ENCODE measurements at regions of chr9 and their contacts with region 1.

Region 1: GRCh38 chr9:134449221-134449894 is 123.1 kb downstream of the RXRA start:
- DNase-seq: peak; percentile 66
- H3K4me3 ChIP-seq: no peak overlapping the region
- H3K27ac ChIP-seq: no peak overlapping the region
- H3K4me1 ChIP-seq: no peaks in the 10 kb centered on the region
- CTCF ChIP-seq: peak; percentile 73

Region 2: DNA sequence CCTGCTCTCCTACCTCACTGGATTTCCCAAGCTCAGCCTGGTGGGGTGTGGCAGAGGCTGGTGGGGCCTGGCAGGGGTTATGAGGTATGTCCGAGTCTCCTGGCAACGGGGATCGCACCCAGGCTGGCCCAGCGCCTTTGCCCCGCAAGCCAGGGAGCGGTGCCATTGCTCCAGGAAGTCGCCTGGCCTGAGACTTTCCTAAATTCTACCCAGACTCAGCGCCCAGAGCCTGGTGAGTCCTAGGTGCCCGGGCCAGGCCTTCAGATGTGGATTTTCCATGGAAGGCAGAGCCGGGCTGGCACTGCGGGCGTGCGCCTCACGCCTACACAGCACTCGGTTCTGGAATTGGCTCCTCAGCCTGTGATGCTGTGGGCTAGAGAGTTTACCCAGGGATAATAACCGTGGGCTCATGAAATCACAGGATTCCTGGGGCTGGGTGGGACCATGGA is 36.8 kb after region 1 on chr9:
- CTCF ChIA-PET with region 1: interaction called, 11 read pairs
- POLR2A ChIA-PET with region 1: no interaction called
- intact Hi-C with region 1: no loop called
- DNase-seq: no peak
- H3K4me3 ChIP-seq: no peak overlapping the region
- H3K27ac ChIP-seq: no peak overlapping the region
- H3K4me1 ChIP-seq: no peaks in the 10 kb centered on the region
- CTCF ChIP-seq: no peak

Measured in OCI-LY7 (cell line).